MCF 10A (cell line): ENCODE measurements at regions of chr2 and their contacts with region 1.

Region 1: GRCh38 chr2:155223781-155224406 is 525.4 kb downstream of the KCNJ3 start:
- DNase-seq: peak; percentile 22
- H3K4me3 Mint-ChIP-seq: no peak overlapping the region
- H3K27ac Mint-ChIP-seq: no peak overlapping the region
- H3K4me1 Mint-ChIP-seq: no peaks in the 10 kb centered on the region
- H3K27me3 Mint-ChIP-seq: peaks cover 79% of the 10 kb centered on the region
- CTCF ChIP-seq: peak; percentile 31

Region 2: GRCh38 chr2:154439156-154439555 is 784.7 kb before region 1 on chr2:
- CTCF ChIA-PET with region 1: no interaction called
- POLR2A ChIA-PET with region 1: no interaction called
- intact Hi-C with region 1: loop called (anchors 5 kb)
- DNase-seq: no peak
- H3K4me3 Mint-ChIP-seq: no peak overlapping the region
- H3K27ac Mint-ChIP-seq: no peak overlapping the region
- H3K4me1 Mint-ChIP-seq: no peaks in the 10 kb centered on the region
- H3K27me3 Mint-ChIP-seq: peaks cover 72% of the 10 kb centered on the region
- CTCF ChIP-seq: peak; percentile 15

Region 3: GRCh38 chr2:155250800-155251199 is 26.9 kb after region 1 on chr2:
- CTCF ChIA-PET with region 1: no interaction called
- POLR2A ChIA-PET with region 1: no interaction called
- intact Hi-C with region 1: no loop called
- DNase-seq: peak; percentile 28
- H3K4me3 Mint-ChIP-seq: no peak overlapping the region
- H3K27ac Mint-ChIP-seq: no peak overlapping the region
- H3K4me1 Mint-ChIP-seq: no peaks in the 10 kb centered on the region
- H3K27me3 Mint-ChIP-seq: peaks cover 70% of the 10 kb centered on the region
- CTCF ChIP-seq: peak; percentile 23